Colonic mucosa (tissue), 4 donors: ENCODE measurements at regions of chr15 and their contacts with region 1.

Region 1: GRCh38 chr15:65184868-65185738 is at the start of gene CLPX:
- DNase-seq: peak; percentile 90
- H3K4me3 ChIP-seq: peak within 1 kb of the TSS; percentile 97
- H3K27ac ChIP-seq: peak within 1 kb of the TSS; percentile 96
- H3K4me1 ChIP-seq: no peaks in the 10 kb centered on the region
- H3K27me3 ChIP-seq: no peaks in the 10 kb centered on the region
- CTCF ChIP-seq: no peak
- total RNA-seq, gene CLPX: 41.8 to 62.0 TPM

Region 2: GRCh38 chr15:65054333-65055200 is 130.5 kb before region 1 on chr15:
- intact Hi-C with region 1: loop called (anchors 10 kb)
- DNase-seq: peak; percentile 78
- H3K4me3 ChIP-seq: no peak overlapping the region
- H3K27ac ChIP-seq: peak overlapping the region; percentile 36
- H3K4me1 ChIP-seq: peaks cover 15% of the 10 kb centered on the region
- H3K27me3 ChIP-seq: no peaks in the 10 kb centered on the region
- CTCF ChIP-seq: peak; percentile 94

Region 3: GRCh38 chr15:65300924-65301441 is 115.9 kb after region 1 on chr15:
- intact Hi-C with region 1: loop called (anchors 2 kb)
- DNase-seq: no peak
- H3K4me3 ChIP-seq: no peak overlapping the region
- H3K27ac ChIP-seq: no peak overlapping the region
- H3K4me1 ChIP-seq: peaks cover 8% of the 10 kb centered on the region
- H3K27me3 ChIP-seq: no peaks in the 10 kb centered on the region
- CTCF ChIP-seq: no peak